ENCODE measurements at regions of chr19 and their contacts with region 1.

Region 1: GRCh38 chr19:1383311-1384084 is at the start of gene NDUFS7:
- DNase-seq: peak; percentile 98
- H3K4me3 Mint-ChIP-seq: peak within 1 kb of the TSS; percentile 92
- H3K27ac Mint-ChIP-seq: peak within 1 kb of the TSS; percentile 97
- H3K4me1 Mint-ChIP-seq: peaks cover 19% of the 10 kb centered on the region
- H3K27me3 Mint-ChIP-seq: peaks cover 9% of the 10 kb centered on the region
- total RNA-seq, gene NDUFS7: 108 and 110 TPM in 2 replicates

Region 2: GRCh38 chr19:1213391-1214286 is 169.9 kb before region 1 on chr19:
- intact Hi-C with region 1: no loop called
- DNase-seq: peak; percentile 87
- H3K4me3 Mint-ChIP-seq: peak overlapping the region; percentile 82
- H3K27ac Mint-ChIP-seq: peak overlapping the region; percentile 99
- H3K4me1 Mint-ChIP-seq: peaks cover 20% of the 10 kb centered on the region
- H3K27me3 Mint-ChIP-seq: no peaks in the 10 kb centered on the region

Region 3: DNA sequence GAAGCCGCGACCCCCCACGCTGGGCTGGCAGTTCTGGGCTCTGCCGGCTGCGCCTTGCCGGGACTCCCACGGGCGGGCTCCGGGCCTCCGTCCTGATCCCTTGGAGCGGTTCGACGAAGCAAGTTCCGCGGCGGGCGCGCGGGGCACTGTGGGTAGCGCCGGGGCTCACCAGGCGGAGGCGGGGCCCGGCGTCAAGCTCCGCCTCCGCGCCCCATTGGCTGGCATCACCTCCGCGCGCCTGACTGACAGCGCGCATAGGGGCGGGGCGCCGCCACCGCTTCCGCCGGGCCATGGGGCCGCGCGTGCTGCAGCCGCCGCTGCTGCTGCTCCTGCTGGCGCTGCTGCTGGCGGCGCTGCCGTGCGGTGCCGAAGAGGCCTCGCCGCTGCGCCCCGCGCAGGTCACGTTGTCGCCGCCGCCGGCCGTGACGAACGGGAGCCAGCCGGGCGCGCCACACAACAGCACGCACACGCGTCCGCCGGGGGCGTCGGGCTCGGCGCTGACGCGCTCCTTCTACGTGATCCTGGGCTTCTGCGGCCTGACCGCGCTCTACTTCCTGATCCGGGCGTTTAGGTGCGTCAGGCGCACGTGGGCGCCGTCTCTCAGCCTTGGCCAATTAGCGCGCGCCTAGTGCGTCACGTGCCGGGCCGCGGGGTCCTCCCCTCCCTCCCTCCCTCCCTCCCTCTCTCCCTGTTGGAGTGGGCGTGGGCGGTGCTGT is 108.1 kb before region 1 on chr19 and contains the start of gene FAM174C:
- intact Hi-C with region 1: loop called (anchors 1 kb)
- DNase-seq: peak; percentile 98
- H3K4me3 Mint-ChIP-seq: peak within 1 kb of the TSS; percentile 84
- H3K27ac Mint-ChIP-seq: peak within 1 kb of the TSS; percentile 92
- H3K4me1 Mint-ChIP-seq: peaks cover 45% of the 10 kb centered on the region
- H3K27me3 Mint-ChIP-seq: no peaks in the 10 kb centered on the region
- total RNA-seq, gene FAM174C: 115 and 126 TPM in 2 replicates

Region 4: DNA sequence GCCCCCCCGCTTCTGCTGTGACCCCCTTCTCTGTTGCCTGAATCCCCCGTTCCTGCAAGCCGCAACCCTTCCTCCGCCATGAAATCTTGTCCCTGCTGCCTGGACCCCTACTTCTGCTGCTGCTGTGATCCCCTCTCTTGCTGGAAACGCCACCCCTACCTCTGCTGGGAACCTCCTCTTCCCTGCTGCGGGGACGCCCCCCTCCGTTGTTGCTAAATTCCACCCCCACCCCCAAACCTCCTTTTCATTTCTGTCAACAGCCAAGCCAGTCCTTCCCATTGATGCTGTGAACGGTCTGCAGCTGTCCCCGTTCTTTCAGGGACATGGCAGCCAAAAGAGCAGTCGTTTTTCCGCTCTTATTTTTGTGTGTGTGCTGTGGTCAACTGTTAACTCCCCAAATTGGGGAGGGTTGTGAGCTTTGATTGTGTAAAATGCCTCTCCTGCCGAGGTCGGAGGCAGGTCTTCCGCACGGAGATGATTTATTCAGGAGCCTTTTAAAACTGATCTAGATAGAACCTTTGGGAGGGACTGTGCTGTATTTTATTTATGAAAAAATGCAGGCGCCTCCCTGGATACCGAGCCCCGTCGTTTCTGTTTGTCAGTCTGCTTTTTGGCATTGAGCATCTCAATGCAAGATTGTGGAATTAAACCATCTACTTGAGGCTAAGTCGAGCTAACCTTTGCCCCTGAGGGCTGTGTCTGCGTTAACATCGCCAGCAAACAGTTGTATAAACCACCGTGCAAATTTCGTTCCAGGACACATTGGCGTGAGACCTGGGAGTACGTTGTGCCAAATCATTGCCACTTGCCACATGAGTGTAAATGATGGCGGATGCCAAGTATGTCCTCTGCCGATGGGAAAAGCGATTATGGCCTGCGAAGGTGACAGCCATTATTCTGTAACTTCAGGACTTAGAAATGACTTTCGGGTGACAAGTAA is 27.7 kb before region 1 on chr19:
- intact Hi-C with region 1: loop called (anchors 1 kb)
- DNase-seq: no peak
- H3K4me3 Mint-ChIP-seq: peak overlapping the region; percentile 86
- H3K27ac Mint-ChIP-seq: peak overlapping the region; percentile 79
- H3K4me1 Mint-ChIP-seq: peaks cover 6% of the 10 kb centered on the region
- H3K27me3 Mint-ChIP-seq: no peaks in the 10 kb centered on the region

Region 5: DNA sequence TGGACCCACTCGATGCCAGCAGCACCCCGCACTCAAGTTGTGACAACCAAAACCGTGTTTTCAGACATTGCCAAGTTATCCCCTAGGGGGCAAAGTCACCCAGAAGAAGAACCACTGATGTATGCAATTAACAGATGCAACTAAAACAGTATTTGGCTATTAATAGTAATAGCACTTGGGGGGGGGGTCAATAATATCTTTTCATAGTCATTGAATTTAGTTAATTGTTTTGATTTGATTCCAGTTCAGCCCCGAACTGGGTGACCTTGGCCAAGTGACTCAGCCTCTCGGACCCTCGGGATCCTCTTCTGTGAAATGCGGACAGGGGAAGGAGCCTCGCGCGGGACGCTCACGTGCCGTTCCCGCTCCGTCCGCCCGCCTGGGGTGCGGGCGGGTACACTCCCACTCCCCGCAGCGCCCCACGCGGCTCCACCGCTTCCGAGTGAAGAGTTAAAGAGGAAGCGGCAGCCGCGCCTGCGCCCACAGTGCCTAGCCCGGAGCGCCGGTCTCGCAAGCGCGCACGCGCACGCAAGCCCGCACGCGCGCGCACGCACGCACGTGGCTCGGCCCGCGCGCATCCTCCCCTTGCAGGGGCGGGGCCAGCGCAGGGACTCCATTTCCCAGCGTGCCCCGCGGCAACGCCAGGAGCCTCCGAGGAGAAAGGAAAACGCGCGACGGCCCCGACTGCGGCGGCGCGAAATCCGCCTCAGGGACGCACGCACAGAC is 23.4 kb after region 1 on chr19:
- intact Hi-C with region 1: loop called (anchors 2 kb)
- DNase-seq: peak; percentile 100
- H3K4me3 Mint-ChIP-seq: peak overlapping the region; percentile 76
- H3K27ac Mint-ChIP-seq: peak overlapping the region; percentile 81
- H3K4me1 Mint-ChIP-seq: peaks cover 37% of the 10 kb centered on the region
- H3K27me3 Mint-ChIP-seq: peaks cover 6% of the 10 kb centered on the region

Region 6: DNA sequence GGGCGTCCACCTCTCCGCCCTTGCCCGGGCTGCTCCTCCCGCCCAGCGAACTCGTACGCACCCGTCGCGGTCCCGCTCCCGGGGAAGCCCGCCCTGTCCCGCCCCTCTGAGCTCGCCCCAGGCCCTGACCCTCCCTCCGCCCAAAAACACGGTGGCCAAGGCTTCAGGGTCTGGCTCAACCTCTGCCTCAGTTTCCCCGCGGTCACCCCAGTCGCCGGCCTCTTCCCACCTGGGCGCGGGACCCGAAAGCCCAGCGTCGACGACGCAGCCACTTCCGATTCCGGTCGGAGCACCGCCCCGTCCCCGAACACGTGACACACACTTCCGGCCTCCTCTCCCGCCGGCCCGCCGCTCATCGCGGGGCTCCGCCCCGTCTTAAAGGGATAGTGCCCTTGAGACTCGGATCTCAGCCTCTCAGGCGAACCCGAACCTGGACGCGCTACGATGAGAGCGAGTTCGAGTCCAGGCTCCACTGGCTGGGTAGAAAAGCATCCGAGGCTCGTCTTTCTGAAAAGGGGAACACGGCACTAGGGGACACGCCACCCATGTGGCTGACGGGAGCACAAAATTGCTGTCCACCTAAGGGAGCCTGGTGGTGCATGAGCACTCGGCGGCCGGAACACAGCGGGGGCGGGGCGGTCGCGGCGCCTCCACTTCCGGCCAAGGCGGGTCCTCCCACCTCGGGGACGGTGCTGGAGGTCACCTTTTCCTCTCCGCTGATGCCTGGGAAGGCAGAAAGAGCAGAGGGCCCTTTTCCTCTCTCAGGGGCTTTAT is 95.6 kb after region 1 on chr19 and contains the start of gene C19orf25:
- intact Hi-C with region 1: loop called (anchors 2 kb)
- DNase-seq: peak; percentile 98
- H3K4me3 Mint-ChIP-seq: peak within 1 kb of the TSS; percentile 96
- H3K27ac Mint-ChIP-seq: peak within 1 kb of the TSS; percentile 96
- H3K4me1 Mint-ChIP-seq: peaks cover 13% of the 10 kb centered on the region
- H3K27me3 Mint-ChIP-seq: no peaks in the 10 kb centered on the region
- total RNA-seq, gene C19orf25: 34.0 and 38.0 TPM in 2 replicates

Measured in activated CD4-positive, alpha-beta T cell treated with anti-CD3 and anti-CD28 coated beads, Interleukin-2, amount 10 ng/mL, durations not matched to agents 24 days and 14 days (primary cell).